ENCODE measurements at regions of chr10 and their contacts with region 1.

Region 1: GRCh38 chr10:72215652-72216549 is at the starts of genes ANAPC16 and ASCC1:
- DNase-seq: peak; percentile 95
- H3K4me3 ChIP-seq: peak within 1 kb of the TSS; percentile 72 to 94 (median 84)
- H3K27ac ChIP-seq: peak within 1 kb of the TSS; percentile 85
- H3K4me1 ChIP-seq: peaks cover 4% of the 10 kb centered on the region
- H3K27me3 ChIP-seq: no peaks in the 10 kb centered on the region
- CTCF ChIP-seq: no peak
- POLR2A ChIP-seq: peak; percentile 94
- total RNA-seq, gene ANAPC16: 44.2 and 44.4 TPM in 2 replicates
- total RNA-seq, gene ASCC1: 24.9 and 28.2 TPM in 2 replicates

Region 2: GRCh38 chr10:72133517-72133916 is 82.4 kb before region 1 on chr10:
- CTCF ChIA-PET with region 1: interaction called, 193 read pairs
- POLR2A ChIA-PET with region 1: no interaction called
- dilution Hi-C with region 1: no loop called
- intact Hi-C with region 1: no loop called
- DNase-seq: no peak
- H3K4me3 ChIP-seq: no peak overlapping the region
- H3K27ac ChIP-seq: no peak overlapping the region
- H3K4me1 ChIP-seq: no peaks in the 10 kb centered on the region
- H3K27me3 ChIP-seq: no peaks in the 10 kb centered on the region
- CTCF ChIP-seq: no peak
- POLR2A ChIP-seq: no peak

Region 3: DNA sequence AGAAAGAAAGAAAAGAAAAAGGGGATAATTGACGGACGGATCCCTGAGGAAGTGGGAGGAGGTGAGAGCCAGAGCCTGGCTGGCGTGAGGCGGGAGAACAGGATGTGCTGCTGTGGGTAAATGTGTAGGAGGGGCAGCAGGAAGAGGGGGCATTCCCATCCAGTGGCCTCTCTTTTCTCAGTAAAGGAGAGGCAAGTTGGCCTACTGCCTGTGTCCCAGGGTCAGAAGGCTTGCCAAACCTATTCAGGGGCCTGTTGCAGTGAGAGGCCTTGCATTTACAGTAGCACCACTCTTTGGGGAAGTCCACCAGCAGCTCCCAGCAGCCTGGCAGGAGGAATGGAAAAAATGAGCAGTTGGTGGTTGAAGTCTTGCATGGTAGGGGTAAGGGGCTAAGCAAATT is 26.8 kb after region 1 on chr10:
- CTCF ChIA-PET with region 1: no interaction called
- POLR2A ChIA-PET with region 1: no interaction called
- dilution Hi-C with region 1: no loop called
- intact Hi-C with region 1: no loop called
- DNase-seq: peak; percentile 82
- H3K4me3 ChIP-seq: no peak overlapping the region
- H3K27ac ChIP-seq: peak overlapping the region; percentile 15
- H3K4me1 ChIP-seq: peaks cover 33% of the 10 kb centered on the region
- H3K27me3 ChIP-seq: no peaks in the 10 kb centered on the region
- CTCF ChIP-seq: no peak
- POLR2A ChIP-seq: no peak